ENCODE measurements at regions of chr4 and their contacts with region 1.

Region 1: GRCh38 chr4:179867300-179867878 is 2375.8 kb upstream of the TENM3 start:
- DNase-seq: peak; percentile 14
- ATAC-seq: peak; percentile 64
- H3K4me3 Mint-ChIP-seq: no peak overlapping the region
- H3K27ac Mint-ChIP-seq: no peak overlapping the region
- H3K4me1 Mint-ChIP-seq: no peaks in the 10 kb centered on the region
- H3K27me3 Mint-ChIP-seq: no peaks in the 10 kb centered on the region
- CTCF ChIP-seq: no peak

Region 2: GRCh38 chr4:179051206-179051605 is 816.2 kb before region 1 on chr4:
- CTCF ChIA-PET with region 1: no interaction called
- POLR2A ChIA-PET with region 1: no interaction called
- intact Hi-C with region 1: no loop called
- DNase-seq: no peak
- ATAC-seq: no peak
- H3K4me3 Mint-ChIP-seq: no peak overlapping the region
- H3K27ac Mint-ChIP-seq: no peak overlapping the region
- H3K4me1 Mint-ChIP-seq: no peaks in the 10 kb centered on the region
- H3K27me3 Mint-ChIP-seq: no peaks in the 10 kb centered on the region
- CTCF ChIP-seq: no peak

Region 3: DNA sequence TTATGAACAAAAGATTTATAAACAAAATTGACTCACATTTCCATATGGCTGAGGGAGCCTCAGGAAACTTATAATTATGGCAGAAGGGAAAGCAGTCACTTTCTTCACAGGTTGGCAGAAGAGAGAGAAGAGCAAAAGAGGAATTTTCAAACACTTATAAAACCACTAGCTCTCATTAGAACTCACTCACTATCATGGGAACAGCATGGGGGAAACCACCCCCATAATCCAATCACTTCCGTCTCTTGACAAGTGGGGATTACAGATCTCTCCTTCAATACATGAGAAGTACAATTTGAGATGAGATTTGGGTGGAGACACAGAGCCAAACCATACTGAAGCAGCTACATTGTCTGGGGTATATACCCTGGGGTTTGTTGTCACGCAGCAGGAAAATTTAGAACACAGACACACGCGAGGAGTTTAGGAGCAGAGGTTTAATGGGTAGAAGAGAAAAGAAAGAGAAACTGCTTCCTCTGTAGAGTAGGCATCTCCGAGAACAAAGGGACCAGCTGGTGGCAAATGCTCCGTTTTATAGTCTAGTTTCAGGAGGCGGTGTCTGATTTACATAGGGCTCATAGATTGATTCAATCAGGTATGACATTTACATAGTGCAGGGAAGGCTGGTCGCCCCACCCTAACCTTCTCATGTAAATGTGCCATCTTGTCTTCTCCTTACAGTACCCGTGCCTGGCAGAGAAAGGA is 147.5 kb before region 1 on chr4:
- CTCF ChIA-PET with region 1: no interaction called
- POLR2A ChIA-PET with region 1: no interaction called
- intact Hi-C with region 1: no loop called
- DNase-seq: no peak
- ATAC-seq: no peak
- H3K4me3 Mint-ChIP-seq: no peak overlapping the region
- H3K27ac Mint-ChIP-seq: no peak overlapping the region
- H3K4me1 Mint-ChIP-seq: no peaks in the 10 kb centered on the region
- H3K27me3 Mint-ChIP-seq: no peaks in the 10 kb centered on the region
- CTCF ChIP-seq: no peak

Region 4: GRCh38 chr4:179843370-179843769 is 24.0 kb before region 1 on chr4:
- CTCF ChIA-PET with region 1: no interaction called
- POLR2A ChIA-PET with region 1: no interaction called
- intact Hi-C with region 1: no loop called
- DNase-seq: no peak
- ATAC-seq: no peak
- H3K4me3 Mint-ChIP-seq: no peak overlapping the region
- H3K27ac Mint-ChIP-seq: no peak overlapping the region
- H3K4me1 Mint-ChIP-seq: no peaks in the 10 kb centered on the region
- H3K27me3 Mint-ChIP-seq: no peaks in the 10 kb centered on the region
- CTCF ChIP-seq: no peak

Region 5: DNA sequence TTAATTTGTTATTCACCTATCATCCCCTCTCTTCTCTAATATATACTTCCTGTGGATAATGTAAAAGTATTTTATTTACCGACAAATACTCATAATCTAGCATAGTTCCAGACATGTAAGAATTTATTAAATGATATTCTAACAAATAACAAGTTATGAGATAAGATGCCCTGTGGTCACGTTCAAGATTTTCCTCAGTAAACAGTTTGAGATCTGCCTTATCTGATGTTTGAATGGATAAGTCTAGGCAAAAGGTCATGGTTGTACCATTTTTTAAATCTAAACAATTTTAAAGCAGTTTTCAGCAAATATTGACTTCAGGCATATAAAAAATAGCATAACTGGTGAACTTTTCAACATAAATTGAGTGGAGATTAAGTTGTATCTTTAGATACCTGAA is 22.6 kb after region 1 on chr4:
- CTCF ChIA-PET with region 1: no interaction called
- POLR2A ChIA-PET with region 1: no interaction called
- intact Hi-C with region 1: no loop called
- DNase-seq: no peak
- ATAC-seq: no peak
- H3K4me3 Mint-ChIP-seq: no peak overlapping the region
- H3K27ac Mint-ChIP-seq: no peak overlapping the region
- H3K4me1 Mint-ChIP-seq: no peaks in the 10 kb centered on the region
- H3K27me3 Mint-ChIP-seq: no peaks in the 10 kb centered on the region
- CTCF ChIP-seq: no peak

Region 6: GRCh38 chr4:180028682-180029081 is 161.3 kb after region 1 on chr4:
- CTCF ChIA-PET with region 1: interaction called, 16 read pairs
- POLR2A ChIA-PET with region 1: no interaction called
- intact Hi-C with region 1: no loop called
- DNase-seq: no peak
- ATAC-seq: no peak
- H3K4me3 Mint-ChIP-seq: no peak overlapping the region
- H3K27ac Mint-ChIP-seq: no peak overlapping the region
- H3K4me1 Mint-ChIP-seq: no peaks in the 10 kb centered on the region
- H3K27me3 Mint-ChIP-seq: no peaks in the 10 kb centered on the region
- CTCF ChIP-seq: no peak

Region 7: GRCh38 chr4:180150818-180151217 is 283.4 kb after region 1 on chr4:
- CTCF ChIA-PET with region 1: no interaction called
- POLR2A ChIA-PET with region 1: no interaction called
- intact Hi-C with region 1: loop called (anchors 5 kb)
- DNase-seq: no peak
- ATAC-seq: no peak
- H3K4me3 Mint-ChIP-seq: no peak overlapping the region
- H3K27ac Mint-ChIP-seq: no peak overlapping the region
- H3K4me1 Mint-ChIP-seq: peaks cover 4% of the 10 kb centered on the region
- H3K27me3 Mint-ChIP-seq: no peaks in the 10 kb centered on the region
- CTCF ChIP-seq: no peak